ENCODE measurements at regions of chr5 and their contacts with region 1.

Region 1: GRCh38 chr5:38809388-38810359 is 36.1 kb upstream of the OSMR start:
- DNase-seq: peak; percentile 81
- ATAC-seq: peak; percentile 85
- H3K4me3 Mint-ChIP-seq: no peak overlapping the region
- H3K27ac Mint-ChIP-seq: no peak overlapping the region
- H3K4me1 Mint-ChIP-seq: peaks cover 11% of the 10 kb centered on the region
- H3K27me3 Mint-ChIP-seq: peaks cover 30% of the 10 kb centered on the region

Region 2: DNA sequence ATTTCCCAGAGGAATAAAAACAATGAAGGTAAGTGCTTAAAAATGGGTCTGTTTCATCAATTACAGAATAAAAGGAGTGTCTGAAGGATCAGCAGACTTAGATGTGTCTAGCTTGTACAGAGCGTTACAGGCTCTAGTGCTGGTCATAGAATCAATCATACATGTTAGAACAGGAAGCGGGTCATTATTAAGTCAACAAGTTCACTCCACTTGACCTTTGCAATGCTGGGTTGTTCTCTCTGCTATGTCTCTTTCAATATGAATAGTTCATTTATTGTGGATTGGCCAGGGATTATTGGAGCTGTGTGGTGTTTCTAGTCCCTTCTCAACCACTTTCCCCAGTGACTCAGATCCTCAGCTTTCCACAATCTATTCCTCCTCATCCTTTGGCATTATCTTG is 572.0 kb before region 1 on chr5:
- CTCF ChIA-PET with region 1: no interaction called
- POLR2A ChIA-PET with region 1: no interaction called
- intact Hi-C with region 1: no loop called
- DNase-seq: no peak
- ATAC-seq: no peak
- H3K4me3 Mint-ChIP-seq: no peak overlapping the region
- H3K27ac Mint-ChIP-seq: no peak overlapping the region
- H3K4me1 Mint-ChIP-seq: no peaks in the 10 kb centered on the region
- H3K27me3 Mint-ChIP-seq: peaks cover 10% of the 10 kb centered on the region

Region 3: GRCh38 chr5:38265546-38266179 is 544.0 kb before region 1 on chr5:
- CTCF ChIA-PET with region 1: interaction called, 6 read pairs
- POLR2A ChIA-PET with region 1: no interaction called
- intact Hi-C with region 1: loop called in 1 of 2 experiments (anchors 2 kb)
- DNase-seq: peak; percentile 70
- ATAC-seq: peak; percentile 58
- H3K4me3 Mint-ChIP-seq: no peak overlapping the region
- H3K27ac Mint-ChIP-seq: no peak overlapping the region
- H3K4me1 Mint-ChIP-seq: no peaks in the 10 kb centered on the region
- H3K27me3 Mint-ChIP-seq: peaks cover 33% of the 10 kb centered on the region

Region 4: GRCh38 chr5:38382898-38383297 is 426.8 kb before region 1 on chr5:
- CTCF ChIA-PET with region 1: interaction called, 22 read pairs
- POLR2A ChIA-PET with region 1: no interaction called
- intact Hi-C with region 1: loop called in 1 of 2 experiments (anchors 1 kb)
- DNase-seq: peak; percentile 73
- ATAC-seq: peak; percentile 96
- H3K4me3 Mint-ChIP-seq: no peak overlapping the region
- H3K27ac Mint-ChIP-seq: no peak overlapping the region
- H3K4me1 Mint-ChIP-seq: peaks cover 1% of the 10 kb centered on the region
- H3K27me3 Mint-ChIP-seq: peaks cover 31% of the 10 kb centered on the region

Region 5: DNA sequence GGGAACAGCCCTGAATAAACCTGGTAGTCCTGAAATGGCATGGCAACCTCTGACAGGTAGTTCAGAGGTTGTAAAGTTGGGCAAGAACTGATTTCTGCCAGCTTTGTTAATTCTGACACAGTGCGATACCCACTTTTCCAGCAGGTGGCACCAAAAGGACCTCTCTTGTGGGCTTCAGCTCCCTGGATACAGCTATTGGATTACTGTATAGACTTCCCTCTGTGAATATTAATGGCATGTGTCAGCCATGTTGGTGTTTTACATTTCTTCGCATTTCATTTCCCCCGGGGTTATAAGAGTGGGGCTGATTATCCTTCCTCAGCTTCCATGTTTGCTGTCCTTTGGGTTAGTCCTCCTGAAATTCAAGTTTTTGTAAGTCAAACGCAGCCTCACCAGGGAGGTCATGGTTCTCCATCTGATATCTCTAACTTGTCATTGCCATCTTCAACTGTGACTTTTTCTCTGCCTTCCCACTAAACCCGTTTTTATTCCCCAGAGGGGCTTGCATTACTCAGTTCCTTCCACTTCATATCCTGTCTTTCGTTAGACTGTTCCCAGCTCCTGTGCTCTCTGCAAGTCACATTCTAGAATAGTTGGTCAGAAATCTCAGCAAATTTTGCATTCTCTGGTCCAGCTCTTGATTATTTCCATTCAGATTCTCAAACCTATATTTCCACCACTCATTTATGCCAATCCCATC is 388.8 kb before region 1 on chr5:
- CTCF ChIA-PET with region 1: interaction called, 46 read pairs
- POLR2A ChIA-PET with region 1: no interaction called
- intact Hi-C with region 1: loop called in 1 of 2 experiments (anchors 1 kb)
- DNase-seq: peak; percentile 54
- ATAC-seq: peak; percentile 42
- H3K4me3 Mint-ChIP-seq: no peak overlapping the region
- H3K27ac Mint-ChIP-seq: no peak overlapping the region
- H3K4me1 Mint-ChIP-seq: no peaks in the 10 kb centered on the region
- H3K27me3 Mint-ChIP-seq: peaks cover 22% of the 10 kb centered on the region

Region 6: GRCh38 chr5:38556599-38557305 is 252.9 kb before region 1 on chr5 and contains the start of gene LIFR:
- CTCF ChIA-PET with region 1: interaction called, 5 read pairs
- POLR2A ChIA-PET with region 1: no interaction called
- intact Hi-C with region 1: loop called (anchors 2 to 5 kb)
- DNase-seq: peak; percentile 77
- ATAC-seq: peak; percentile 70
- H3K4me3 Mint-ChIP-seq: peak within 1 kb of the TSS; percentile 72
- H3K27ac Mint-ChIP-seq: no peak within 1 kb of the TSS
- H3K4me1 Mint-ChIP-seq: peaks cover 10% of the 10 kb centered on the region
- H3K27me3 Mint-ChIP-seq: peaks cover 52% of the 10 kb centered on the region
- total RNA-seq, gene LIFR: 0.09 to 0.14 TPM

Region 7: DNA sequence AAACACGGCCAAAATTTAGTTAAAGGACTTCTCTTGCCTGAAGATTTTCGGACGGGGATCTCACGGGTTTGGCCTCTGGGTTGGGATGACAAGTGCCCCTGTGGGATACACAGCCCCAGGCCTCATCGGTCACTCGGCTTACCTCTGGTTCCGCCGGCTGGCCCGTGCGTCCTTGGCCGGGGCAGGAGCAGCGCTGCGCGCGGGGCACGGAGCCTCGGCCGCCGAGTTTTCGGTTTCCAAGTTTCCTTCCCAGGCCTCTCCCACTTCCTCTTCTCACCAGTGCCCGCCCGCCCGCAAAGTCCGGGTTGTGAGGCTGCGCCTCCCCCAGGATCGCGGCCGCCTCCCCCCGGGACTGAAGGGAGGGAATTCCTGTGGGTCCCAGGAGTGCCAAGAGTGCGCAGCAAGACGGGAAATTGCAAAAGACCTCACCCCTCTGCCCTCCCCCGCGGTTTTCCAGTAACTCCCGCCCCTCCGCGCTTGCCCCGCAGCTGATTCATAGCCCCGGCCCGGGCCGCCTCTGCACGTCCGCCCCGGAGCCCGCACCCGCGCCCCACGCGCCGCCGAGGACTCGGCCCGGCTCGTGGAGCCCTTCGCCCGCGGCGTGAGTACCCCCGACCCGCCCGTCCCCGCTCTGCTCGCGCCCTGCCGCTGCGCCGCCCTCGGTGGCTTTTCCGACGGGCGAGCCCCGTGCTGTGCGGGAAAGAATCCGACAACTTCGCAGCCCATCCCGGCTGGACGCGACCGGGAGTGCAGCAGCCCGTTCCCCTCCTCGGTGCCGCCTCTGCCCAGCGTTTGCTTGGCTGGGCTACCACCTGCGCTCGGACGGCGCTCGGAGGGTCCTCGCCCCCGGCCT is 36.1 kb after region 1 on chr5 and contains the start of gene OSMR:
- CTCF ChIA-PET with region 1: no interaction called
- POLR2A ChIA-PET with region 1: no interaction called
- intact Hi-C with region 1: no loop called
- DNase-seq: peak; percentile 72
- ATAC-seq: peak; percentile 74
- H3K4me3 Mint-ChIP-seq: peak within 1 kb of the TSS; percentile 70
- H3K27ac Mint-ChIP-seq: peak within 1 kb of the TSS; percentile 61
- H3K4me1 Mint-ChIP-seq: peaks cover 8% of the 10 kb centered on the region
- H3K27me3 Mint-ChIP-seq: peaks cover 48% of the 10 kb centered on the region
- total RNA-seq, gene OSMR: 0.25 to 0.26 TPM